GM12878 (cell line): ENCODE measurements at regions of chr7 and their contacts with region 1.

Region 1: DNA sequence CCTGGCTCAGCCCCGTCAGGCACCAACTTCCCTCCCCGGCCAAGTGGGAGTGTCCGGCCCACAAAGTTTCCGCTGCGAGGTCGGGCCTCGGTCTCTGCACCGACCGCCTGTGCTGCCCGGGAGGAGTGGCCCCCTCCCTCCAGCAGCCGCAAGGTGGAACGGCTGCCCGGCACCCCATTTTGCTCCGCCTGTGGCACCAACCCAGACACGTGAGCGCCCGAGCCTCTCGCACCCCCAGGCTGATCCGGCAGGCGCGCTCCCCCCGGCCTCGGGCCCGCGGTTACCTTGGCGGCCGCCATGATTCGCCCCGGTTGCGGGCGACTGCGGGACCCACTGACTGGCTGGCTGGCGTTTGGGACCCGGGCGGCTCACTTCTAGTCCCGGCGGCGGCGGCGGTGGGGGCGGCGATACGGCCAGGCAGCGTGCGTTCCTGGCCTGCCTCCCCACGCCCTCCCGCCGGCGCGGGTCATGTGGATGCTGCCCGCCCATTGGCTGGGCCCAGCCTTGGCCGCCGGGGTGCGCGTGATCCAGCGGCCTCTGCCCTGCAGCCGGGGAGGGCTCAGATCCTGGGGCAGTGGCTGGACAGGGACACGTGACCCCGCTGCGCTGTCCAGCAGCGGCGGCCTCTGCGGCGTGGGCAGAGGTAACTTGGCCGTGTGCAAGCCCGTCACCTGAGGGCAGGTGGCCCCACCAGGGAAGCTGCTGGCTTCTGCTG is at the start of gene SLC25A13:
- DNase-seq: peak; percentile 40
- ATAC-seq: peak; percentile 93
- H3K4me3 ChIP-seq: peak within 1 kb of the TSS; percentile 82
- H3K27ac ChIP-seq: peak within 1 kb of the TSS; percentile 89
- H3K4me1 ChIP-seq: peaks cover 12% of the 10 kb centered on the region
- H3K27me3 ChIP-seq: no peaks in the 10 kb centered on the region
- CTCF ChIP-seq: no peak
- EP300 ChIP-seq: 0 out of 4 replicates have a peak, but pooled peaks of 1 of the 2 experiments have one; percentile 0
- POLR2A ChIP-seq: peak; percentile 82
- RAD21 ChIP-seq: no peak
- polyA plus RNA-seq, gene SLC25A13: 7.0 to 7.4 TPM

Region 2: DNA sequence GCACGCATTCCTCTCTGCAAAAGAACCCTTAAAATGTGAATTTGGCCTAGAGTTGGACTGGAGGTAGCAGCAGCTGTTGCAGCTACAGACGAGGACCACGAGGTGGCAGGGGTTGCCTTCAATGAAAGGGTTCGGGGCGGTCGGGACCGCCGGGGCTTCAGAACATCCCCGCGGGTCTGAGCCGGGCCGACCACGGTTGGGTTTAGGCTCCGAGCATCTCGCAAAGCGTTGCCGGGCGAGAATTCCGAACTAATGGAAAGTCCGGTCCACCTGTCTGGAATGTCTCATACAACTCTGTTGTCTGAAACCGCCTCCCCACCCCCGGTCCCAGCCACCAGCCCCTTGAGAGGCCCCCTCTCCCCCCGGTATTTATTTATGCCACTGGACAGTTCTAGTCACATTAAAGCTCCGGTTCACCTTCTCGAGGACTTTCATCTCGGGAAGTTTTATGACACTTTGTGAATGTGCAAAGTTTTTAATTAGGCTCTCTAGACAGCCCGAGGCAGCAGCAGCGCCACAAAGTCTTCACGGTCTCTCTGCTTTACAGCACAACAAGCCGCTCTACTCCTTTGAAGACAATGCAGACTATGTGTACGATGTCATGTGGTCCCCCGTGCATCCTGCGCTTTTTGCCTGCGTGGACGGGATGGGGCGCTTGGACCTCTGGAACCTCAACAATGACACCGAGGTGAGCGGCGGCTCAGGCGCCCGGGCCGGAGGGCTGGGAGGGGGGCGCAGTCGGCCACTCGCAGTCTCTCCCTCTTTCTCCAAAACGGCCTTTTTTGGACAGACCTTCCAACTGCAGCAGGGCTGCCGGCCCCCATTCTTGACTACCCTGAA is 246.1 kb before region 1 on chr7:
- CTCF ChIA-PET with region 1: no interaction called
- POLR2A ChIA-PET with region 1: no interaction called
- RAD21 ChIA-PET with region 1: no interaction called
- SMC1A ChIA-PET with region 1: no interaction called
- in situ Hi-C with region 1: no loop called
- intact Hi-C with region 1: no loop called
- DNase-seq: no peak
- ATAC-seq: peak; percentile 96
- H3K4me3 ChIP-seq: peak overlapping the region; percentile 7; the same call in 1 of the 2 replicates
- H3K27ac ChIP-seq: no peak overlapping the region
- H3K4me1 ChIP-seq: no peaks in the 10 kb centered on the region
- H3K27me3 ChIP-seq: peaks cover 3 to 11% of the 10 kb centered on the region in 2 experiments; a peak in 3 of 4 replicates
- CTCF ChIP-seq: peak; percentile 74 to 80 (median 77)
- EP300 ChIP-seq: no peak
- POLR2A ChIP-seq: no peak
- RAD21 ChIP-seq: peak; percentile 81

Region 3: DNA sequence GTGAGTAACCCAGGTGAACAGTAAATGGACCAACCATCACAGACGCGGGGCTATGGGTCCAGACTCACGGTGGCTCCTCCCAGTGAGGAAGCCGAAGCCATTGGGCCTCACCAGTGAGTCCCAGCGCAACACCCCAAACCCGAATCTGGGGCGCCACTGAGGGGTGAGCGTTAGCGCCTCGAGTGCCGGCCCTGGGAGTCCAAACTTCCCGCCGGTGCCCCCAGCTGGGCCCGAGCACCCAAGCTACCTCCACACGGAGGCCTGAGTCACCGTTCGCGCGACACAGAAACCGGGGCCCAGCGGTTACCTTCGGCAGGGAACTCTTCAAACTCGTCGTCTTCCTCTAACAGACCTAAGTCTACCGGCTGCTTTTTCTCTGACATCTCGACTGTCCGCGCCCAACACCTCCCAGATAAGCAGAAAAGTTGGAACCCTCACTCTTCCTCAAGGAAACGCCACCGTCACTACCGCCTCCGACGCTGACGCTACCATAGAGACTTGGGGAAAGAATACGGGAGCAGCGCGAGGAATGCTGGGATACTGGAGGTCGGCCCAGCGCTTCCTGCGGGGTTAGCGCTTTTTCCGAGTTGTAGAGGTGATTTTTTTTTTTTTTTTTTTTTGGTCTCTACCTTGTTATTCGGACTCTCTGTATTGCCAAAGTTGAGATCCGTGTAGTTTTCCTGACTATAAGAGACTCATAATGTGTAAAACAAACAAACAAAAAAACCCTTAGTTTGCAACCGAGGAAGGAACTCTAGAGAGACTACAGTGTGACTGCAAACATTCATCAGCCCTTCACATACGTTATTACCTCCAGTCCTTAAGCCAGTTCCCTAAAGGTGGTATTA is 387.8 kb after region 1 on chr7 and contains the start of gene SEM1:
- CTCF ChIA-PET with region 1: no interaction called
- POLR2A ChIA-PET with region 1: no interaction called
- RAD21 ChIA-PET with region 1: no interaction called
- SMC1A ChIA-PET with region 1: no interaction called
- in situ Hi-C with region 1: no loop called
- intact Hi-C with region 1: loop called (anchors 10 kb)
- DNase-seq: peak; percentile 40
- ATAC-seq: peak; percentile 94
- H3K4me3 ChIP-seq: peak within 1 kb of the TSS; percentile 90
- H3K27ac ChIP-seq: peak within 1 kb of the TSS; percentile 78
- H3K4me1 ChIP-seq: no peaks in the 10 kb centered on the region; the same call in 1 of the 2 replicates
- H3K27me3 ChIP-seq: no peaks in the 10 kb centered on the region
- CTCF ChIP-seq: no peak
- EP300 ChIP-seq: no peak
- POLR2A ChIP-seq: peak; percentile 82
- RAD21 ChIP-seq: no peak
- polyA plus RNA-seq, gene SEM1: 504 to 606 TPM